Right ventricle myocardium inferior (tissue), 1 donor: ENCODE measurements at regions of chr16 and their contacts with region 1.

Region 1: GRCh38 chr16:52068447-52069074 is 478.4 kb downstream of the TOX3 start:
- DNase-seq: no peak
- ATAC-seq: peak; percentile 65

Region 2: GRCh38 chr16:51592001-51592501 is 476.5 kb before region 1 on chr16:
- intact Hi-C with region 1: no loop called
- DNase-seq: no peak
- ATAC-seq: no peak

Region 3: DNA sequence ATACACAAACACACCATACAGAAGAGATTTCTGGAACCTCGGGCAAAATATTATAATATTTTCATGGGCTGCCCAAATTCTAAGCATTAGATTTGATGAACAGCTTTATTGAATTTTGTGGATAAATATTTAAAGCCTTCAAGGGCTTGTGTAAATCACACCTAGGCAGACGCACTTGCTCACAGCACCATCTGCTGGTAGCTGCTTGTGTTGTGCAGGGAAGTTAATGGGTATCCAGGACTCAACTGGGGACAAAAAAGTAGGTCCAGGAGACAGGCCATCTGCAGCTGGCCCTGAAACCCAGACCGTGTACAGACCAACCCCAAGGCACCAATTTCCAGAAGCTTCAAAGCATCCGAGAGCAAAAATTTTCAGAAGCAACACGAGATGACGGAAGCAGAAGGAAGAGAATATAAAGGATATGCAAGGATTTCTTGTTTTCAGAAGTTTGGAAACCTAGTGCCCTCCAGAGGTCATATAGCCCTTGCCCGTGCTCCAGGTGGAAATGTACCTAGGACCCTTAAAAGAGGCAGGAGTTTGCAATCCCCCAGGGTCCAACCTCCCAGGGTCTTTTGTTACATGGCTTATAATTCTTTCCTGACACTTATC is 844.1 kb after region 1 on chr16:
- intact Hi-C with region 1: loop called (anchors 5 kb)
- DNase-seq: no peak
- ATAC-seq: peak; percentile 46

Region 4: DNA sequence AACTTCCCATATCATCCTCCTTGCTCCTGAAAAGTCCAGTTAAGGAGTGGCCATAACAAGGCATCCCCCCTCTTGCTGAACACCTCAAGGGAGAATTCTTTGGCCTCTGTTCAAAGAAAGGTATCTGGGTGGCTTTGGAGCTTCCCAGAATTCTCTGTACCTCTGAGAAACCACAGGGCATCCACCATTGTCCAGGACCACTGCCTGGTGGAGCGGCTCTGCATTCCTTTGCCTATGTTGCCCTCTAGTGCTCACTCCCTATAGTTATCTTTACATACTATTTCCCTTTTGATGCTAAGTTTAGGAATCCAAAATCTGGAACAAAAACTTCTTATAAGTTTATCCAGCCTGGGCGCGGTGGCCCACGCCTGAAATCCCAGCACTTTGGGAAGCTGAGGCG is 953.8 kb after region 1 on chr16:
- intact Hi-C with region 1: loop called (anchors 5 kb)
- DNase-seq: no peak
- ATAC-seq: peak; percentile 69